ENCODE measurements at regions of chr6 and their contacts with region 1.

Region 1: GRCh38 chr6:33014841-33015634 is 5.6 kb upstream of the HLA-DOA start:
- DNase-seq: peak; percentile 70
- CTCF ChIP-seq: peak; percentile 65

Region 2: DNA sequence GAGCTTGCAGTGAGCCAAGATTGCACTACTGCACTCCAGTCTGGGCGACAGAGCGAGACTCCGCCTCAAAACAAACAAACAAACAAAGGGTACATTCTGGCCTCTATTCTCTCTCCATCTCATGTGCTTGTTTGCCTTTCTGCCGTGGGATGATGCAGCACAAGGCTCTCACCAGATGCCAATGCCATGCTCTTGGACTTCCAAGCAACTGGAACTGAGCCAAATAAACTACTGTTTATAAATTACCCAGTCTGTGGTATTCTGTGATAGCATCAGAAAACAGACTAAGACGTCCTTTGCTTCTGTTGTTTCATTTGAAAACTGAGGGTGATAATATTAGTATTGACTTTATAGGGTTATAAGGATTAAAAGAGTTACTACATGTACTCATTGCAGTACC is 50.3 kb before region 1 on chr6:
- CTCF ChIA-PET with region 1: no interaction called
- POLR2A ChIA-PET with region 1: no interaction called
- DNase-seq: no peak
- CTCF ChIP-seq: no peak

Region 3: GRCh38 chr6:33049323-33050013 is 34.4 kb after region 1 on chr6:
- CTCF ChIA-PET with region 1: interaction called, 21 read pairs
- POLR2A ChIA-PET with region 1: no interaction called
- DNase-seq: no peak
- CTCF ChIP-seq: peak; percentile 17

Region 4: DNA sequence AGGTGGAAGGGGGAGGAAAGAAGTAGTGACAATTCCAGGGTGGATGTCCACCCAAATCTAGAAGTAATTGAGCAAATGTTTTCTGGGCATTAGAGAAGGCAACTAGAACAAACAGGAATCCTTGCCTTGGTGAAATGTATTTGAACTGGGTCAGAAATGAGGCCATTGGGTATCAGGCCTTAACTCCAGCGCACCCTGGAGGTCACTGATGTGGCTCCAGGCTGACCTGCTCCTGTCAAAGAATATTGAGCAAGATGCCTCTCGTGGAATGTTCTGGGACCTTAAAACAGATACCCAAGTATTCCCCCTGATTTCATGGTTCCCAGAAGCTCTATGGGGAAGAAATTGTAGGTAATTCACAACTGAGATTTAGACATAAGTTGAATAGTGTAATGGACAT is 67.7 kb after region 1 on chr6:
- CTCF ChIA-PET with region 1: interaction called, 78 read pairs
- POLR2A ChIA-PET with region 1: no interaction called
- DNase-seq: peak; percentile 42
- CTCF ChIP-seq: peak; percentile 57

Region 5: DNA sequence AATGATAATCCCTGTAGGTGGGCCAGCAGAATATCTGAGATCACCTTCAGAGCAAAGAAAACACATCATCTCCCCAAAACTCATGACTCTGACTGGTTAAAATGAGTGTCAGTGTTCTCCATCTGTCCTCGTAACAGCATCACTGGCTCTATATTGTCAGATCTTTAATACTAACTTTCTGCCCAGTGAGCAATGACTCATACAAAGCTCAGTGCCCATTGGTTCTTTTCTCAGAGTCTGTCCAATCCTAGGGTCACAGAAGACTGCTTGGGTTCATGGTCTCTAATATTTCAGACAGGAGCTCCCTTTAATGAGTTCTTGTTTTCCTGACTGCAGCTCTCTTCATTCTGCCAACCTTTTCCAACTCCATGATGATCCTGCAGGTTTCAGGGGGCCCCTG is 97.1 kb after region 1 on chr6:
- CTCF ChIA-PET with region 1: interaction called, 17 read pairs
- POLR2A ChIA-PET with region 1: no interaction called
- DNase-seq: peak; percentile 83
- CTCF ChIP-seq: no peak

Region 6: GRCh38 chr6:33147807-33148666 is 133.0 kb after region 1 on chr6:
- CTCF ChIA-PET with region 1: interaction called, 23 read pairs
- POLR2A ChIA-PET with region 1: no interaction called
- DNase-seq: peak; percentile 39
- CTCF ChIP-seq: peak; percentile 77